Endothelial cell of umbilical vein (primary cell): ENCODE measurements at regions of chr3 and their contacts with region 1.

Region 1: GRCh38 chr3:126982471-126983175 is at the start of gene PLXNA1:
- DNase-seq: peak; percentile 81
- H3K4me3 ChIP-seq: peak within 1 kb of the TSS; percentile 34 to 51 (median 51)
- H3K27ac ChIP-seq: peak within 1 kb of the TSS; percentile 48
- H3K4me1 ChIP-seq: peaks cover 13% of the 10 kb centered on the region
- H3K27me3 ChIP-seq: peaks cover 3 to 29% of the 10 kb centered on the region in 2 experiments
- CTCF ChIP-seq: peak; percentile 95 to 96
- POLR2A ChIP-seq: no peak
- total RNA-seq, gene PLXNA1: 18.4 and 18.5 TPM in 2 replicates

Region 2: GRCh38 chr3:126679318-126679751 is 303.3 kb before region 1 on chr3:
- CTCF ChIA-PET with region 1: interaction called, 6 read pairs
- POLR2A ChIA-PET with region 1: no interaction called
- dilution Hi-C with region 1: no loop called
- intact Hi-C with region 1: loop called (anchors 1 kb)
- DNase-seq: peak; percentile 76
- H3K4me3 ChIP-seq: no peak overlapping the region
- H3K27ac ChIP-seq: no peak overlapping the region
- H3K4me1 ChIP-seq: no peaks in the 10 kb centered on the region
- H3K27me3 ChIP-seq: peaks cover 6 to 26% of the 10 kb centered on the region in 2 experiments
- CTCF ChIP-seq: peak; percentile 91 to 97
- POLR2A ChIP-seq: no peak

Region 3: DNA sequence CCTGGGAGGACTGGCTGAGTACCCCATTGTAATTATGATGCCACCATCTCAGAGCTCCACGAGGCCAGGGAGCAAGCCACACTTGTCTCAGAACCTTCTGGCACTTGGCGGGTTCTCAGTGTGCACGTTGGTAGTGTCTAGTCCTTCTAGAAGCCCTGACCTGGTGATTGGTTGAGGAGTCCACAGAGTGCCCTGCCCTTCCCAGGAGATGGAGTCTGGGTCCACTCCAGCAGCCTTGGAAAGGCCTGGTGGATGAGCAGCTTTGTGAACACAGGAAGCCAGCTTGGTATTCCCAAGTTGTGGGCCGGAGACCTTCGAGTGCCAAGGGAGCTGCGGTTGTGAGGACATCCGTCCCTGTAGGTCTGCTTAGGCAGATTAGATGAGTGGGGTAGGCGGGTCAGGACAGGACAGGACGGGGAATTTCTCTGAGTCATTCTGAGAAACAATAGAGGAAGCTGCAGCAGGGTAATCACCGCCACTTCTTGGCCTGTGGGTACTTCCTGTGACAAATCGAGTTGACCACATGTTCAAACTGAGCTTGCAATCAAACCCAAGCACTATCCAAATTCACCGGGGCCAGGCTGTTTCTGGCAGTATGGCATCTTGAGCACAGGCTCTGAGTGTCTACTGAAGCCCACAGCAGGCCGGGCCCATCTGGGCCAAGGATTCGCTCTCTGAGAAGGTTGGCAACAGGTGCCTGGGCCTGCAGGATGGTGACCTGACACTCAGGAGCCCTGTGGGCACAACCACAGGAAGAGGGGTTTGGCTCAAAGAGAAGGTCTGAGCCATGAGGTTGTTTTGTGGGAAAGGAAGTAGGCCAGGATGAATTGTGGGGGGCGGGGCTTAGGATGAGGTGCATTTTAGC is 71.2 kb before region 1 on chr3:
- CTCF ChIA-PET with region 1: interaction called, 4 read pairs
- POLR2A ChIA-PET with region 1: no interaction called
- dilution Hi-C with region 1: no loop called
- intact Hi-C with region 1: loop called (anchors 1 kb)
- DNase-seq: peak; percentile 96
- H3K4me3 ChIP-seq: no peak overlapping the region
- H3K27ac ChIP-seq: peak overlapping the region; percentile 59
- H3K4me1 ChIP-seq: peaks cover 24% of the 10 kb centered on the region
- H3K27me3 ChIP-seq: peaks cover 11 to 23% of the 10 kb centered on the region in 2 experiments
- CTCF ChIP-seq: no peak
- POLR2A ChIP-seq: peak; percentile 62

Region 4: DNA sequence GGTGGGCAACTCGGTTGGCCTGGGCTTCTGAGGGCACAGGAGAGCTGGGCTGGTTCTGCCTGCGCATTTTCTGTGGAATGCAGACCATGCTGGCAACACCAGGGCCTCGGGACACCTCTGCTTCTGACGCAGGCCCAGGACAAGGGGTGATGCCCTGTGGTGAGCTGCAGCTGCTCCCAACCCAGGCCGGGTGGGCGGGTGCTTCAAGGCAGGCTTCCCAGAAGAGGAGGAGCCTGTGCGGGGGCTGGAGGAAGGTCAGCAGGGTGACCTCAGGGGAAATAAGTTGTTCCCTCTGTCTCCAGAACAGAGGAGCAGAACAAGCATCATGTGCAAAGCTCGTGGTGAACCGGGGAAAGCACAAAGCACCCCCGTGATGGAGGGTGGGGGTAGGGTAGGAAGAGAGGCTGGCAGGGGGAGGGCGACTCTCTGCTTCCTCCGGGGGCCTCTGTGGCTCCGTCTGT is 10.7 kb before region 1 on chr3:
- CTCF ChIA-PET with region 1: interaction called, 35 read pairs
- POLR2A ChIA-PET with region 1: no interaction called
- dilution Hi-C with region 1: no loop called
- intact Hi-C with region 1: no loop called
- DNase-seq: no peak
- H3K4me3 ChIP-seq: no peak overlapping the region
- H3K27ac ChIP-seq: no peak overlapping the region
- H3K4me1 ChIP-seq: no peaks in the 10 kb centered on the region
- H3K27me3 ChIP-seq: peaks cover 11 to 15% of the 10 kb centered on the region in 2 experiments
- CTCF ChIP-seq: no peak
- POLR2A ChIP-seq: no peak

Region 5: DNA sequence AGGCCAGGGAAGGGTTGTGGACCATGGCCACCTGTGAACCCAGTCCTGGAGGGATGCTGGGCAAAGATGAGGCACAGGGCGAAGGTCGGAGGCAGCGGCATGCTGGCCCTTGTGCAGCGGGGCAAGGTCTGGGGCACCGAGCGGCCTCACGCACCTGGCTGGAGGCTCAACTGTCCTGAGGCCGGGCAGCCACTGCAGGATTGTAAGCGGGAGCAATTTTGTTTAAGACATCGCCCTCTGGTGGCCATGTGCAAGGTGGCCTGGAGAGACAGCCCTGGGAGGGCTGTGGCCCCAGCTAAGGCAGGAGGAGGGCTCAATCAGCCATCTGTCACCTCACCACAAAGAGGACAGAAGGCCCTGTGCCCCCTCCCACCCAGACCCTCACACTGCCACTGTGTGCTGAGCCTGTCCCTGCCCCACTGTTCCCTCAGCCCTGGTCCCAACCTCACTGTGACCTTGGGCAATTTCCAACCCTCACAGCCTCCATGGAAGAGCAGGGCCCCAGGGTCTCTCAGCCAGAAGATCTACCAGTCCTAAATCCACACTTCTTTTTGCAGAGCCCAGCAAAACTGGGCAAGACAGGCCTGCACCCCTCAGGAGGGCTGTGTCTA is 561.7 kb after region 1 on chr3:
- CTCF ChIA-PET with region 1: no interaction called
- POLR2A ChIA-PET with region 1: no interaction called
- dilution Hi-C with region 1: no loop called
- intact Hi-C with region 1: loop called (anchors 1 kb)
- DNase-seq: peak; percentile 47
- H3K4me3 ChIP-seq: no peak overlapping the region
- H3K27ac ChIP-seq: no peak overlapping the region
- H3K4me1 ChIP-seq: peaks cover 4% of the 10 kb centered on the region
- H3K27me3 ChIP-seq: no peaks in the 10 kb centered on the region
- CTCF ChIP-seq: peak; percentile 80 to 89
- POLR2A ChIP-seq: no peak